ENCODE measurements at regions of chr4 and their contacts with region 1.

Region 1: GRCh38 chr4:109424093-109424841 is 9.3 kb upstream of the SEC24B start:
- DNase-seq: no peak
- H3K4me3 ChIP-seq: no peak overlapping the region
- CTCF ChIP-seq: no peak

Region 2: DNA sequence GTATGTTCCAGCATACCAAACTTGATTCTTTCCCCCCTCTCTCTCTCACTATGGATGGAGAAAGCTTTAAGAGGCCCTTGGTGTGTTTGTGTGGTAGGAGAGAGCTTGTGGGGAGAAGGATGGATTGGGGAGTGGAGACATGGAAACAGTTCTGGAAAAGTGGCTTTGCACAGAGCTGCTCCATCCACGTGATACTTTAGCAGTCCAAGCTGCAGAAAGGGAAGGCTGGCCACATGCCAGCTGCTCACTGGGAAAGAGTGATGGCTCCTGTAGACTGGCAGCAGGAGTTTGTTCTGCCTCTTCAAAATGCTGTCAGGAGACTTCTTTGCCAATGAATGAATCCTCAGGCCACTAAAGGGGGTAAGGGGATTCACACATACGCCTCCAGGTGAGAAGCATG is 12.3 kb before region 1 on chr4:
- CTCF ChIA-PET with region 1: interaction called, 10 read pairs
- POLR2A ChIA-PET with region 1: no interaction called
- DNase-seq: no peak
- H3K4me3 ChIP-seq: no peak overlapping the region
- CTCF ChIP-seq: no peak

Region 3: DNA sequence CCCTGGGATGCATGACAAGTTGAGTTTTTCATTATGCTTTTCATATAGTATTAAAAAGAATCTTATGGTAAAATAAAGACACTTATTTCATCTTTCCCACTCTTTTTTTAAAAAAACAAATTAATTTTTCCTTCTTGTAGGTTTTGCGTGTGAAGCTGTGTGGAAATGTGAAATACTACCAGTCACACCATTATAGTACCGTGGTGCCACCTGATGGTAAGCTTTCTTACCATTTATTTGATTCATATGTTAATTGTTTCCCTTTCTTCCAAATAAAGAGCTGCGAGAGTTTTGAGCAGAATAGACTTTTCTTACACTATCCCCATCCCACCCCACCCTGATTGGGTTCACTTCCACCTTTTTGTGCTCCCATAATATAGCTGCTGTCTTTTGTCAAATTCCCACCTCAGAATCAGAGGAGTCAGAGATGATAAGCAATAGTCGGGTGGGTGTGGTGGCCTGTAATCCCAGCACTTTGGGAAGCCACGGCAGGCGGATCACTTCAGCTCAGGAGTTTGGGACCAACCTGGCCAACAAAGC is 234.7 kb after region 1 on chr4:
- CTCF ChIA-PET with region 1: interaction called, 16 read pairs
- POLR2A ChIA-PET with region 1: no interaction called
- DNase-seq: no peak
- H3K4me3 ChIP-seq: no peak overlapping the region
- CTCF ChIP-seq: no peak

Region 4: GRCh38 chr4:109826719-109827118 is 402.5 kb after region 1 on chr4:
- CTCF ChIA-PET with region 1: interaction called, 55 read pairs
- POLR2A ChIA-PET with region 1: no interaction called
- DNase-seq: no peak
- H3K4me3 ChIP-seq: no peak overlapping the region
- CTCF ChIP-seq: peak; percentile 20

Region 5: GRCh38 chr4:109977854-109978501 is 553.7 kb after region 1 on chr4:
- CTCF ChIA-PET with region 1: interaction called, 146 read pairs
- POLR2A ChIA-PET with region 1: no interaction called
- DNase-seq: no peak
- H3K4me3 ChIP-seq: no peak overlapping the region
- CTCF ChIP-seq: peak; percentile 38

Measured in AG04449 (cell line).